Activated CD4-positive, alpha-beta T cell treated with anti-CD3 and anti-CD28 coated beads for 36 hours (primary cell): ENCODE measurements at regions of chr12 and their contacts with region 1.

Region 1: DNA sequence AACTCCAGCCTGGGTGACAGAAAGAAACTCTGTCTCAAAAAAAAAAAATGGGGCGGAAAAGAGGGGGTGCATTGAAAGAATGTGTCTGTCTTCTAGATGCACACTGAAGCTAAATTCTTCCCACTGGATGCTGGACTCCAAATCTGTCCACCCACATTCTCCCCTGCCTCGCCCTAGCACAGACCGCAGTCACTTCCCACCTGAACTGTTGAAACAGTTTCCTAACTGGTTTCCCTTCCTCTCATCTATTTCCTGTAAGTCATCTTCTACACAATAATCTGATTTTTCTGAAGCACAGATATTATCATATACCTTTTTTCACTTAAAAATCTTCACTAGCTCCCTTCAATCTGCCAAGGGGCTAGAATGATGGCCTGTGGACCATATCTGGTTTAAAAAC is 1.5 kb upstream of the HCAR1 start:
- DNase-seq: peak; percentile 63
- ATAC-seq: peak; percentile 20
- H3K4me3 Mint-ChIP-seq: no peak overlapping the region
- H3K27ac Mint-ChIP-seq: peak overlapping the region; percentile 83
- H3K4me1 Mint-ChIP-seq: peaks cover 64% of the 10 kb centered on the region
- H3K27me3 Mint-ChIP-seq: no peaks in the 10 kb centered on the region

Region 2: DNA sequence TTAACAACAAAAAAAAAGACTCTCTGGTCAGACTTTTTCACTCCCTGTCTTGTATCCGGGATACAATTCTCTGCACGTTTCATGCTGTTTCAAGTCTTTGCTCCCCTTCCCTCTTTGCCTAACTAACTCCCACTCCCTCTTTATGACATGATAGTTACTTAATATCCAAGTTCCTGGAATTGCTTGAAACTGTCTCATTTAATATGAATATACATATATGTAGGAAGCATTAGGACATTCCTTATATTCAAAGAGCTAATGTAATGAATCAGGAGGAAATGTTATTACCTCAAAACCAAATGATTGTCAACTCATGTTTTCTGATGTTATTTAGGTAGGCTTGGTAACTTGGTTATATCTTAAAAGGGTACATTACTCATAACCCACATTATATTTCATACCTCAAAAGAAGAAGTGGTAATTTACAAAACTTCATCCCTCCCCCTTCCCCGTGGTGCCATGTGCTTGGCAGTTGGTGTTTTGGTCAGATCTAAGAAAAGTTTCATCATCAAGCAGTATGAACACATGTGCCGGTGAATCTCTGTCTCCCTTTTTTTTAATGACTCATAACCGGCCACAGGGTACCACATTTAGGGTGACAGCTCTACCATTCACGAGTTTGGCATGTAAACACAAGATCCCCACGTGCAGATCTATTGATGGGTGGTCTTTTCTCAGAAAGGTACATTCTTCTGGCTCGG is 85.5 kb before region 1 on chr12:
- CTCF ChIA-PET with region 1: interaction called, 3 read pairs
- POLR2A ChIA-PET with region 1: interaction called, 4 read pairs
- intact Hi-C with region 1: loop called (anchors 1 to 2 kb)
- DNase-seq: peak; percentile 81
- ATAC-seq: peak; percentile 97
- H3K4me3 Mint-ChIP-seq: peak overlapping the region; percentile 54
- H3K27ac Mint-ChIP-seq: peak overlapping the region; percentile 79
- H3K4me1 Mint-ChIP-seq: peaks cover 18% of the 10 kb centered on the region
- H3K27me3 Mint-ChIP-seq: peaks cover 2% of the 10 kb centered on the region

Region 3: DNA sequence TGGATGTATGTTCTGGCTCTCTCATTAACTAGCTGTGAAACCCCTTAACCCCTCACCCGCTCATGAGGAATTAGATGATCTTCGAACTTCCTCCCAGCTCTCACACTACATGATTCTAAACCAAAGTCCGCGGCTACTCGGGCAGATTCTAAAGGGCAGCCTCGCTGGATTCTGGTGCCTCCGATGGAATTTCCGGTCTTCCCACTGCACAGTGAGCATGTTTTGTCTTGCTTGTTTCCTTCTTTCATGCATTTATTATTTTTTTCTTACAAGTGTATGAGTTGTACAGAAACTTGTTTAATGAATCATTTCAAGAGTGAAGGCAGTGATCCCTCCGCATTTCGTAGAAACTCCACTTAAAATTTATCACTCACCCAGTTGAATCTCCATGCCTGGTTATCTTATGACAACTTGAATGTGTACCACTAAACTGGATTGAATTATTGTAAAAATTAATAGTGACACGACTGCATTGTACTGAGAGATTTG is 11.1 kb before region 1 on chr12:
- CTCF ChIA-PET with region 1: interaction called, 3 read pairs
- POLR2A ChIA-PET with region 1: no interaction called
- intact Hi-C with region 1: loop called in 1 of 2 experiments (anchors 1 kb)
- DNase-seq: peak; percentile 26
- ATAC-seq: peak; percentile 64
- H3K4me3 Mint-ChIP-seq: no peak overlapping the region
- H3K27ac Mint-ChIP-seq: peak overlapping the region; percentile 80
- H3K4me1 Mint-ChIP-seq: peaks cover 41% of the 10 kb centered on the region
- H3K27me3 Mint-ChIP-seq: no peaks in the 10 kb centered on the region

Region 4: DNA sequence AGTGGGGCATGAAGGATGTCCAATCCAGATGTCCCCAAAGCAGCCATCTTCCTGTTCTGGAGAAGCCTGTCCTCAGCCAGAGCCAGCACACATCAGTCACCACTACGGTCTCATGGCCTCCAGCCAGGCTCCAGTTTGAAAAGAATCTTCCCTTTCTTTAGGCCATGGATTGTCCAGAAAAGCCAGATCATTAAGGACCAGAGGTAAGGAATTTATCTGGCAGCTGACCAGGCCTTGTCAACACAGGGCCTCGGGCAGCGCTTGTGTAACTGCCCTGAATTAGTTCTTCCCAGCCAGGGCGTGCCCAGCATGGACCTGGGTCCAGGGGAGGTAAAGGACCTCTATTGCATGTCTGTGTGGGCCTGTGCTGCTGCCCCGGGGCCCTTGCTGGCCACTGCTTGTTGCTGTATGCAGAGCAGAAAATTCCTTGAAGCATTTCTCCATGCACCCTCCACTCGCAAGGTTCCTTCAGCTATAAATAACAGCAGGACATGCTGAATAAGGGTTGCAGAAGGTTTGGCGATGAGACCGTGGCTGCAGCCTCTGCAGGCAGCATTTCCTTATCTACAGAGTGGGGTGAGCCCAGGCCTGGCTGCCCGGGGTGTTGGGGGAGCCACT is 185.4 kb after region 1 on chr12:
- CTCF ChIA-PET with region 1: no interaction called
- POLR2A ChIA-PET with region 1: no interaction called
- intact Hi-C with region 1: no loop called
- DNase-seq: no peak
- ATAC-seq: no peak
- H3K4me3 Mint-ChIP-seq: no peak overlapping the region
- H3K27ac Mint-ChIP-seq: no peak overlapping the region
- H3K4me1 Mint-ChIP-seq: peaks cover 5% of the 10 kb centered on the region
- H3K27me3 Mint-ChIP-seq: no peaks in the 10 kb centered on the region